MCF 10A (cell line): ENCODE measurements at regions of chr2 and their contacts with region 1.

Region 1: DNA sequence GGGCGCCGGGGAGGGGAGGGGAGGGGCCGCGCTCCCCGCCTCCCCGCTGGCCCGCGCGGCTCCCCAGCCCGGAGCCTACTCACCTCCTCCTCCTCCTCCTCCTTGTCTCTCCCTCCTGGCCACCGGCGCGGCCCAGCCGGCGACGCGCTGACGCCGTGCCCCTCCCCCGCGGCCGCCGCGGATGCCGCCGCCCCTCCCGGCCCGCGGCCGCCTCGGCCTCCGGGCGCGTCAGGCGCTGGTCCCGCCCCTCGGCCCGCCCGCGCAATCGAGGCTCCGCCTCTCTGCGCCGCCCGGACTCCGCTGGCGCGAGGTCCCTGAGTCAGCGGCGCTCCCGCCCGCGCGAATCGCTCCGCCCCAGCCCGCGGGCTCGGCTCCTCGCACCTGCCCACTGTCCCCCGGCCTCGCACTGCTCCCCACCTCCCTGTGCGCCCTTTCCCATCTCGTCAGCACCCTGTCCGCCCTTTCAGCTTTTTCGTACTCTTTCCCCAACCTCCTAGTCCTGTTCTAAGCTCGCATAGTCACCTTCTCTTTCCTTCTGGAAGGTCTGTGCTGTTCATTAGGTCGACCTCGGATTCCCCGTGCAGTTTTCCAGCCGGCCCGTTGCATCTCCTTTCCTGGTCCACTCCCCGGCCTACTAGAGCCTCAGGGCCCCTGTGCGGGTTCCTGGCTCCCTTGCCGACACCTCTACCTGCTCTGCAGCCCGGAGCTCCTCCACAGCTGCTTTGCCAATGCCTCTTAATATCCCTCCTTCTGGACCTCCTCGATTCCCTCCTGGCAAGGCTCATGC is 187.4 kb downstream of the ZEB2 start:
- DNase-seq: peak; percentile 82
- H3K4me3 Mint-ChIP-seq: peak overlapping the region; percentile 76
- H3K27ac Mint-ChIP-seq: peak overlapping the region; percentile 74
- H3K4me1 Mint-ChIP-seq: peaks cover 6% of the 10 kb centered on the region
- H3K27me3 Mint-ChIP-seq: no peaks in the 10 kb centered on the region
- CTCF ChIP-seq: no peak

Region 2: DNA sequence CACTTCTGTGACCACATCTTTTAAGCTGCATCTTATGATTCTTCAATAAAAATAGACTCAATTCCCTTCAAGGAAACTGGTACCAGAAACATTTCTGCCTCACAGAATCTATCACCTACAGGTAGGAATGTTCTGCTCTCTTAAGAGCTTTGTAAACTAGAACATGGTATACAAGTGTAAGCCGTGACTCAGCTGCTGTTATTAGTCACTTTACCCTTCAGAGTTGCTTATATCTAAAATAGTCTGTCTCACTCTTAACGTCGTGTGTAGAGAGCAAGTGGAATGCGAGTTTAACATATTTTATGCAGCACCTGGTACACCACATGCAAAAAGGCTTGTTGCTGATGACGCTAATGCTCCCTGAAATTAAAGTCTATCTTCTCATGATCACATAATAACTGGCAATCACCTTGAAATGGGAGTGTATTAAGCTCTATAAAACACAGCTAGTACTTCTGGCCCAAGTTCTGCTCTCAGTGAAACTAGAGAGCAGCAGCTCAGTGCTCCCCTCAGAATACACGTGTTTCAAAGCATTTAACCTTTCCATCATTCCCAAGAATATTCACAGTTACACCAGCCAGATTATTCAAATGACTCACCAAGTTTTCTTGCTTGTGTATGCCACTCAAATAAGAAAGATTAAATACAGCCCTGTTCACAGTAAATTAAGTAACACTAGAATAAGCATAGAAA is 232.7 kb before region 1 on chr2:
- CTCF ChIA-PET with region 1: no interaction called
- POLR2A ChIA-PET with region 1: interaction called, 8 read pairs
- intact Hi-C with region 1: loop called (anchors 2 kb)
- DNase-seq: peak; percentile 80
- H3K4me3 Mint-ChIP-seq: peak overlapping the region; percentile 52
- H3K27ac Mint-ChIP-seq: peak overlapping the region; percentile 65
- H3K4me1 Mint-ChIP-seq: peaks cover 22% of the 10 kb centered on the region
- H3K27me3 Mint-ChIP-seq: no peaks in the 10 kb centered on the region
- CTCF ChIP-seq: peak; percentile 39

Region 3: DNA sequence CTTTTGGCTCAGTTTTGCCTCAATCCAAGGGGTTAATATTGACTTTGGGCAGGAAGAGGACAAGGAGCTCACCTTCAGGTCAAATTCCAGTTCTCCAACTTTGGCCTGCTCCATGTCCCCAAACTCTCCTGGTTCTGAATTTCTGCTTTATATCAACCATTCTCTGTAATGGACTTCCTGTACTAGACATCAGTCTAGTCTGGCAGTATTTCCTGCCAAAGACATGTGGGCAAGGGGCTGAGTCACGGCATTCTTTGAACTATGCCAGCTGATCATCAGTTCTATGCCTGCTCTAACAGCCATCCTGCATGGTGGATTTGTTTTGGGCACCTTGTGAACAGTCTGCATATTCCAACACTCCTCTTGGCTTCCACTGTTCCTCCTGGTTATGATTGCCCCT is 12.1 kb before region 1 on chr2:
- CTCF ChIA-PET with region 1: no interaction called
- POLR2A ChIA-PET with region 1: interaction called, 12 read pairs
- intact Hi-C with region 1: no loop called
- DNase-seq: peak; percentile 69
- H3K4me3 Mint-ChIP-seq: no peak overlapping the region
- H3K27ac Mint-ChIP-seq: peak overlapping the region; percentile 88
- H3K4me1 Mint-ChIP-seq: peaks cover 29% of the 10 kb centered on the region
- H3K27me3 Mint-ChIP-seq: no peaks in the 10 kb centered on the region
- CTCF ChIP-seq: no peak

Region 4: DNA sequence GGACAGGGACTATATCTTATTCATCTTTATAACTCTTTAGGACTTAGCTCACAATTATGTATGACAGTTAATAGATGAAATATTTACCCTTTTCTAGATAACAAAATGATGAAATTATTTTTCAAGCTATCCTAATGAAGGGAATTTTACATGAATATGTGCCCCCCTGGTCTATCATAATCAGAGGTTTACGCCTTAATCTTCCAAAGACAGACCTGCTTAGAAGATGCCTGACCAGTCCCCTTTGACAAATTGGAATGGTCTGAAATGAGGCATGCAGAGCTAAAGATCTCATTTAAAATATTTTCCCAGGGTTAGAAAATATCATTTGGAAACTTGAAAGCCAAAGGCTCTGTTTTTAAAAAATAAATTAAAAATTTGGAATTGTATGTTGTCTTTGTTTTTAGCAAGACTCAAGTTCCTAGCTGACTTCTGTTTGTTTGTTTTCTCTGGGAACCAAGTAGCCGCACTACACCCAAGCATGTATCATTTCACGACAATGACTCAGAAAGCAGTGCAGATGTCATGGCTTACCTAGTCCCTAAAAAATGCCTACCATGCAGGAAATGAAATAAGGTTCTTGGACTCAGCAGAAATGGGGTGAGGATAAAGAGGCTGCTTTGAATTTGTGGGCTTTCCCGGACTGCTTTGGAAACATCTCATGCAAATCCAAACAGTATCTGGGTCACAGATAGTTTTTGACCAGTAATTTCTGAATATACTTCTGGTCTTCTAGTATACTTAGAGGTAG is 25.2 kb after region 1 on chr2:
- CTCF ChIA-PET with region 1: interaction called, 3 read pairs
- POLR2A ChIA-PET with region 1: interaction called, 12 read pairs
- intact Hi-C with region 1: no loop called
- DNase-seq: peak; percentile 84
- H3K4me3 Mint-ChIP-seq: no peak overlapping the region
- H3K27ac Mint-ChIP-seq: peak overlapping the region; percentile 90
- H3K4me1 Mint-ChIP-seq: peaks cover 24% of the 10 kb centered on the region
- H3K27me3 Mint-ChIP-seq: no peaks in the 10 kb centered on the region
- CTCF ChIP-seq: no peak

Region 5: DNA sequence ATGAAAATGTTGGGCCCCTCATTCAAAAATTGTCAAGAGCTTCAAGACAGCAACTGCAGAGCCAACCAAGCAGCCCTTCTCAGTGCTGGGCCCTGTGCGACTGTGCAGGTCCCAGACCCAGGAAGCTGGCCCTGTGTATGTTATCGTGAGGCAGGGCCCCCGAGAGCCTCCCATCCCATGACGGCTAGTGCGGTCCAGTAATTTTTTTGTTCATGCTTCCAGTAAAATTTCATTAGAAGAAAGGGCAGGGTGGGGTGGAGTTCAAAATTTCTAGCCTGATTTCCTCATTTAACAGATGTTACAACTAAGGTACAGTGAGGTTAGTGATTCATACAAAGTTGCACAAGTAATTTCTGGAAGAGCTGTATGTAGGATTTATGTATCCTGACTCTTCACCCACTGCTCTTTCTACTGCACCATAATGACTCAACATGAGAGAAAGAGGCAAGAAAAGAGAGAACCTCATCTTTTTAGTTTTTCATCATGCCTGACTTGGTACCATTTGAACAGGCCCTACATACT is 81.8 kb after region 1 on chr2:
- CTCF ChIA-PET with region 1: no interaction called
- POLR2A ChIA-PET with region 1: no interaction called
- intact Hi-C with region 1: loop called (anchors 5 kb)
- DNase-seq: peak; percentile 94
- H3K4me3 Mint-ChIP-seq: no peak overlapping the region
- H3K27ac Mint-ChIP-seq: peak overlapping the region; percentile 76
- H3K4me1 Mint-ChIP-seq: peaks cover 21% of the 10 kb centered on the region
- H3K27me3 Mint-ChIP-seq: no peaks in the 10 kb centered on the region
- CTCF ChIP-seq: no peak

Region 6: DNA sequence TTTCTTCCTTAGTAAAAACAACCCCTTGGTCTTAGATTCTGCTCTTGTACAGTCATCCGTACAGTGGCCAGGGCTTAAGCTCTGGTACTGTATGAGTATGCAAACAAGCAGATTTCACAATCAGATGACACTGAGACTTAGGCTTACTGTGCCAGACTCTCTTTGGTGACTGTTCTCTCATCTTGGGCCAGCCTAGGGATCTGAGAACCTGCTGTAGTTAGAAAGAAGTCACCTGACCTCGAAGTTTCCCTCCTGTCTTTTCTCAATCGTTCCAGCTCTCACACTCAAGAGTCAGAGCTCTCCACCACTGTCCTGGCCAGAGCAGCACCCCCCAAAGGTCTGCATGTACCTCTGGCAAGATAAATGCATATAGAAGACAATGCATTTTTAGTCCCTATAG is 124.1 kb after region 1 on chr2:
- CTCF ChIA-PET with region 1: no interaction called
- POLR2A ChIA-PET with region 1: no interaction called
- intact Hi-C with region 1: loop called (anchors 1 kb)
- DNase-seq: peak; percentile 81
- H3K4me3 Mint-ChIP-seq: no peak overlapping the region
- H3K27ac Mint-ChIP-seq: no peak overlapping the region
- H3K4me1 Mint-ChIP-seq: peaks cover 25% of the 10 kb centered on the region
- H3K27me3 Mint-ChIP-seq: no peaks in the 10 kb centered on the region
- CTCF ChIP-seq: no peak

Region 7: DNA sequence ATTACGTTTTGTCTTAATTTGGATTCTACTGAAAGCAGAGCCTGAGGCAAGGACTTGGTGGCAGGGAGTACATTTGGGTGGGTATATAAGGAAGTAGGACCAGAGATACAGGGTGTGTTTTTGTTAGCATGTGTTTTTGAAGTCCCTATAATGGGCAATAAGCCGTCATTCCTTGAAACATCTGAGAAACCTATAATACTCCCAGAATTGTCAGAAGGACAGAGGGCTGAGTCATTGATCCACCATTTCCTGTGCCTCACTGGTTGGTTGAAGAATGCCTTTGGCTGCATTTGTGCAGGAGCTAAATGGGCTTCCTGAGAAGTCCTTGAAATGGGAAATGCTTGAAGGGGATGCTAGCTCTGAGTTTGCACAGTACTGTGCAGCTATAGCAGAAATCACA is 469.2 kb after region 1 on chr2:
- CTCF ChIA-PET with region 1: no interaction called
- POLR2A ChIA-PET with region 1: no interaction called
- intact Hi-C with region 1: no loop called
- DNase-seq: peak; percentile 50
- H3K4me3 Mint-ChIP-seq: no peak overlapping the region
- H3K27ac Mint-ChIP-seq: no peak overlapping the region
- H3K4me1 Mint-ChIP-seq: peaks cover 11% of the 10 kb centered on the region
- H3K27me3 Mint-ChIP-seq: no peaks in the 10 kb centered on the region
- CTCF ChIP-seq: no peak

Region 8: GRCh38 chr2:144890828-144891227 is 558.3 kb after region 1 on chr2:
- CTCF ChIA-PET with region 1: no interaction called
- POLR2A ChIA-PET with region 1: no interaction called
- intact Hi-C with region 1: loop called (anchors 10 kb)
- DNase-seq: peak; percentile 47
- H3K4me3 Mint-ChIP-seq: no peak overlapping the region
- H3K27ac Mint-ChIP-seq: no peak overlapping the region
- H3K4me1 Mint-ChIP-seq: no peaks in the 10 kb centered on the region
- H3K27me3 Mint-ChIP-seq: no peaks in the 10 kb centered on the region
- CTCF ChIP-seq: no peak